Naive thymus-derived CD4-positive, alpha-beta T cell (primary cell): ENCODE measurements at regions of chr17 and their contacts with region 1.

Region 1: GRCh38 chr17:40355123-40355803 is 9.3 kb downstream of the GJD3 start:
- DNase-seq: peak; percentile 63 to 93 (median 78)
- ATAC-seq: peak; percentile 86
- H3K4me3 ChIP-seq: no peak overlapping the region
- H3K4me3 Mint-ChIP-seq: peak overlapping the region in 1 of 10 donors; percentile 32
- H3K27ac ChIP-seq: no peak overlapping the region
- H3K27ac Mint-ChIP-seq: peak overlapping the region in 5 of 9 donors; percentile 6 to 69 (median 32)
- H3K4me1 ChIP-seq: no peaks in the 10 kb centered on the region
- H3K4me1 Mint-ChIP-seq: peaks cover 8 to 25% (median 18%) of the 10 kb centered on the region in 7 donors
- H3K27me3 ChIP-seq: no peaks in the 10 kb centered on the region
- H3K27me3 Mint-ChIP-seq: peaks cover 0 to 5% (median 0%) of the 10 kb centered on the region in 5 donors

Region 2: GRCh38 chr17:40293363-40293762 is 61.9 kb before region 1 on chr17:
- CTCF ChIA-PET with region 1: interaction called, 27 read pairs
- POLR2A ChIA-PET with region 1: interaction called, 13 read pairs
- intact Hi-C with region 1: no loop called
- DNase-seq: no peak
- ATAC-seq: no peak
- H3K4me3 ChIP-seq: no peak overlapping the region
- H3K4me3 Mint-ChIP-seq: no peak overlapping the region
- H3K27ac ChIP-seq: no peak overlapping the region
- H3K27ac Mint-ChIP-seq: no peak overlapping the region
- H3K4me1 ChIP-seq: no peaks in the 10 kb centered on the region
- H3K4me1 Mint-ChIP-seq: peaks cover 0 to 38% (median 10%) of the 10 kb centered on the region in 7 donors
- H3K27me3 ChIP-seq: no peaks in the 10 kb centered on the region
- H3K27me3 Mint-ChIP-seq: no peaks in the 10 kb centered on the region

Region 3: DNA sequence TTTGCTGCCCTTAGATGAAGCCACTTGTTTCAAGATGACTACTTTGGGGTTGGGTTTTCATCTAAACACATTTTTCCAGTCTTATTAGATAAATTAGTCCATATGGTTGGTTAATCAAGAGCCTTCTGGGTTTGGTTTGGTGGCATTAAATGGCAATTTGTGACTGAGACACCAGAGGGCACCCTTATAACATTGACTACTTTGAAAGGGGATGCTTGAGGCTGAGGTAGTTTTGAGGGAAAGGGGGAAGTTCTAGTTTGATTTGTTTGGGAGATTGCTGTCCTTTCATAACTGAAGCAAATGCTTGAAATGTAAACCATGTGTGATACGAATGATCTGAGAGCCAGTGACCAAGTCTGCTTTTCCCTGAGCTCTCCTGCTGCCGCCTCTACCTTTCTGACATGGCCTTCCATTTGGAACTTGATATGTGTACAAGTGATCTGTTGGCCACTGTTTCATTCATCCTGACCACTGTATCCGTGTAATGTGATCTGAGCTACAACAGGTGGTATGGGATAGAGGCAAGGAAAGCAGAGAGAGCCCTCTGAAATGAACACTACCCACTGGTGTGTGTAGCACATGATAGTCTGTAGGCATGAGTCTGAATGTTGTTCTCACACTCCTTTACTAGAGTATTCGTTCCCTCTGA is 52.1 kb before region 1 on chr17:
- CTCF ChIA-PET with region 1: interaction called, 233 read pairs
- POLR2A ChIA-PET with region 1: interaction called, 35 read pairs
- intact Hi-C with region 1: loop called (anchors 1 kb)
- DNase-seq: peak in 7 of 9 donors; percentile 43 to 70 (median 64)
- ATAC-seq: peak; percentile 86
- H3K4me3 ChIP-seq: no peak overlapping the region
- H3K4me3 Mint-ChIP-seq: peak overlapping the region in 2 of 10 donors; percentile 8 to 44
- H3K27ac ChIP-seq: no peak overlapping the region
- H3K27ac Mint-ChIP-seq: peak overlapping the region in 7 of 9 donors; percentile 3 to 34 (median 19)
- H3K4me1 ChIP-seq: peaks cover 13 to 28% of the 10 kb centered on the region in 2 donors
- H3K4me1 Mint-ChIP-seq: peaks cover 11 to 21% (median 15%) of the 10 kb centered on the region in 7 donors
- H3K27me3 ChIP-seq: no peaks in the 10 kb centered on the region
- H3K27me3 Mint-ChIP-seq: no peaks in the 10 kb centered on the region

Region 4: GRCh38 chr17:40326014-40326831 is 29.0 kb before region 1 on chr17:
- CTCF ChIA-PET with region 1: interaction called, 87 read pairs
- POLR2A ChIA-PET with region 1: interaction called, 6 read pairs
- intact Hi-C with region 1: no loop called
- DNase-seq: peak in 7 of 9 donors; percentile 52 to 73 (median 67)
- ATAC-seq: peak; percentile 23
- H3K4me3 ChIP-seq: peak overlapping the region; percentile 47
- H3K4me3 Mint-ChIP-seq: peak overlapping the region; percentile 80 to 97 (median 88)
- H3K27ac ChIP-seq: peak overlapping the region; percentile 91
- H3K27ac Mint-ChIP-seq: peak overlapping the region; percentile 93 to 100 (median 99)
- H3K4me1 ChIP-seq: peaks cover 83 to 87% of the 10 kb centered on the region in 2 donors
- H3K4me1 Mint-ChIP-seq: peaks cover 68 to 97% (median 93%) of the 10 kb centered on the region in 7 donors
- H3K27me3 ChIP-seq: no peaks in the 10 kb centered on the region
- H3K27me3 Mint-ChIP-seq: peaks cover 0 to 9% (median 0%) of the 10 kb centered on the region in 5 donors